Activated CD4-positive, alpha-beta memory T cell treated with anti-CD3 and anti-CD28 coated beads for 36 hours (primary cell): ENCODE measurements at regions of chr15 and their contacts with region 1.

Region 1: DNA sequence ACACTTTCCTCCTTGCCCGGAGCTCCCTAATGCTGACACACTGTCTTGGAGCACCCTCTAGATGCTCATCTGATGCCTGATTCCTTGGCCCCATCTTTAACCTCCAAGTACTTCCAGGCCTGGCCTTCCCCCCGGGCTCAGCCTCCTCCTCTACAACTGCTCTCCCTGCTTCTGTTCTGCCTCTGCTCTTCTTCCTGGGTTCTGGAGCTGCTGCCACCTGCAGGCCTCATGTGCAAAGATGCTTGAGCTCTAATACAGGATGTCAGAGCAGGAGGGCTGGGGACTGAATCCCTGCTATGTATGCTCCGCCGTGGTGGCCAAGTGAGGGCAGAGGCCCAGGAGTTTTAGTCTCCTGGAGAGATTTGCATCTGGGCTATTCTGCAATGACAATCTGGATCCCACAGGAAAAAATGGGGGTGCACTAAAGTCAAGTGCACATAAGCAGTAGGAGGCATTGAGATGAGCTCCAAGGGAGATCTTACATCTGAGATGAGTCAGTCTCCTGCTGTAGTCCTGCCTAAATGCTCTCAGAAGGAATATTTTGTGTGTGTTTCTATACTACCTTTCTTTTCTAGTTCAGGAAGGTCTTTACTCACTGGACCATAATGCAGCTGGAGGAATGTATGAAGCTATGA is 296.3 kb downstream of the UACA start:
- DNase-seq: peak; percentile 66
- H3K4me3 Mint-ChIP-seq: no peak overlapping the region
- H3K27ac Mint-ChIP-seq: no peak overlapping the region
- H3K4me1 Mint-ChIP-seq: no peaks in the 10 kb centered on the region
- H3K27me3 Mint-ChIP-seq: peaks cover 22% of the 10 kb centered on the region

Region 2: DNA sequence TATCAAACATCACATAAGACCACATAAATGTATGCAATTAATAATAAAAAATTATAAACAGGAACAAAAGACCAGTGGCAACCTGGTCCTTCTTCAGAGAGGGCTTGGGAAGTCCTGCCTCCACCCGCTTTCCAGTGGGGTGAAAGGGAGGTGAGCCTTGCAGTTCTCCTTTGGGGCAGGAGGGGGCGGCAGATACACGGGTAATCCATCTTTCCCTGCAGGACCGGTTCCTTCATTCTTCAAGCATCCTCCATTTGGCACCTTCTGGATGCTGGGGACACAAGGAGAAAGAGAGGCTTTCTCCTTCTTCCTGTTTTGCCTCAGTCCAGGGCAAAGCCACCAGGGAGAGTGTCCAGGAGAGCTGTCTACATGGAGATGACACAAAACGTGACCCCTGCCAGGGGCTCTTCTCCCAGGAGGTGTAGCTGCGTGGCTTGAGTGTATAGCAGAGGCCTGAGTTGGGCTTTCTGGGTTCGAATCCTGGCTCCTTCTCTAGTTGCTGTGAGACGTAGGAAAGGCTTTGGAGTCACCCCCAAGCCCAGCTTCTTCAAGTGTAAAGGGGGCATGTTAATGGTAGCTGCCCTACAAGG is 991.1 kb before region 1 on chr15:
- CTCF ChIA-PET with region 1: interaction called, 12 read pairs
- POLR2A ChIA-PET with region 1: no interaction called
- intact Hi-C with region 1: loop called (anchors 5 kb)
- DNase-seq: peak; percentile 83
- H3K4me3 Mint-ChIP-seq: no peak overlapping the region
- H3K27ac Mint-ChIP-seq: no peak overlapping the region
- H3K4me1 Mint-ChIP-seq: no peaks in the 10 kb centered on the region
- H3K27me3 Mint-ChIP-seq: peaks cover 4% of the 10 kb centered on the region

Region 3: GRCh38 chr15:69523010-69524001 is 943.7 kb before region 1 on chr15:
- CTCF ChIA-PET with region 1: interaction called, 3 read pairs
- POLR2A ChIA-PET with region 1: no interaction called
- intact Hi-C with region 1: loop called (anchors 5 kb)
- DNase-seq: peak; percentile 84
- H3K4me3 Mint-ChIP-seq: no peak overlapping the region
- H3K27ac Mint-ChIP-seq: no peak overlapping the region
- H3K4me1 Mint-ChIP-seq: peaks cover 4% of the 10 kb centered on the region
- H3K27me3 Mint-ChIP-seq: peaks cover 2% of the 10 kb centered on the region

Region 4: GRCh38 chr15:70451821-70452653 is 15.0 kb before region 1 on chr15:
- CTCF ChIA-PET with region 1: interaction called, 10 read pairs
- POLR2A ChIA-PET with region 1: no interaction called
- intact Hi-C with region 1: no loop called
- DNase-seq: peak; percentile 55
- H3K4me3 Mint-ChIP-seq: no peak overlapping the region
- H3K27ac Mint-ChIP-seq: no peak overlapping the region
- H3K4me1 Mint-ChIP-seq: peaks cover 30% of the 10 kb centered on the region
- H3K27me3 Mint-ChIP-seq: peaks cover 8% of the 10 kb centered on the region

Region 5: DNA sequence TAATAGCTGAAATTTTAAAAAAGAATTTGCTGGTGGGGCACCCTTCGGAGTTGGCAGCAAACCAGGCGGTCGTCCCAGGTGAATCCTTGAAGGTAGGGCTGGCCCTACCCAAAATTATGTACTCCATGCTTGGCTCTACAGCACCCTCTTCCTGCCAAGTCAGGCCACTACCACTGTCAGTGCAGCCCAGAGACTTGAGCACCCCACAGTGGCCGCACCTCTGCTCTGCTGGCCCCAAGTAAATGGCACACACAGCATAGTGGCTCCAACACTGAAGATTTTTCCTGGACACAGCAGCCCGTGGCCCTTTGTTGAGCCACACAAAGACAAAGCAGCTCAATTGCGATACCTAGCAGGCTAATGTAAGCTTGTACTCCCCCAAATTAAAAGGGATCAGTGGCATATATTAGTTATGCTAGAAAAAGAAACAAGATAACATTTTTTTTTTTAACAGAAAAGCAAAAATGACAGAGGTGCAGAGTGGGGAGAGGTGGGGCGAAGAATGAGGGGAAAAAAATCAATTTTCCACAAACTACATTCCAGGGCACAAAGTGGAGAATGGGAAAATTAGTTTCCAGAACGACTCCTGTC is 45.9 kb after region 1 on chr15:
- CTCF ChIA-PET with region 1: interaction called, 31 read pairs
- POLR2A ChIA-PET with region 1: no interaction called
- intact Hi-C with region 1: no loop called
- DNase-seq: peak; percentile 86
- H3K4me3 Mint-ChIP-seq: no peak overlapping the region
- H3K27ac Mint-ChIP-seq: no peak overlapping the region
- H3K4me1 Mint-ChIP-seq: peaks cover 21% of the 10 kb centered on the region
- H3K27me3 Mint-ChIP-seq: peaks cover 5% of the 10 kb centered on the region